HEK293 (cell line): ENCODE measurements at regions of chr14 and their contacts with region 1.

Region 1: GRCh38 chr14:90374813-90375212 is 22.0 kb upstream of the CALM1 start:
- H3K4me3 ChIP-seq: no peak overlapping the region
- H3K27ac ChIP-seq: no peak overlapping the region
- H3K4me1 ChIP-seq: no peaks in the 10 kb centered on the region
- CTCF ChIP-seq: no peak

Region 2: GRCh38 chr14:90319173-90319572 is 55.6 kb before region 1 on chr14:
- CTCF ChIA-PET with region 1: interaction called, 11 read pairs
- POLR2A ChIA-PET with region 1: no interaction called
- H3K4me3 ChIP-seq: no peak overlapping the region
- H3K27ac ChIP-seq: no peak overlapping the region
- H3K4me1 ChIP-seq: no peaks in the 10 kb centered on the region
- CTCF ChIP-seq: no peak